CD8-positive, alpha-beta T cell (primary cell): ENCODE measurements at regions of chr15 and their contacts with region 1.

Region 1: DNA sequence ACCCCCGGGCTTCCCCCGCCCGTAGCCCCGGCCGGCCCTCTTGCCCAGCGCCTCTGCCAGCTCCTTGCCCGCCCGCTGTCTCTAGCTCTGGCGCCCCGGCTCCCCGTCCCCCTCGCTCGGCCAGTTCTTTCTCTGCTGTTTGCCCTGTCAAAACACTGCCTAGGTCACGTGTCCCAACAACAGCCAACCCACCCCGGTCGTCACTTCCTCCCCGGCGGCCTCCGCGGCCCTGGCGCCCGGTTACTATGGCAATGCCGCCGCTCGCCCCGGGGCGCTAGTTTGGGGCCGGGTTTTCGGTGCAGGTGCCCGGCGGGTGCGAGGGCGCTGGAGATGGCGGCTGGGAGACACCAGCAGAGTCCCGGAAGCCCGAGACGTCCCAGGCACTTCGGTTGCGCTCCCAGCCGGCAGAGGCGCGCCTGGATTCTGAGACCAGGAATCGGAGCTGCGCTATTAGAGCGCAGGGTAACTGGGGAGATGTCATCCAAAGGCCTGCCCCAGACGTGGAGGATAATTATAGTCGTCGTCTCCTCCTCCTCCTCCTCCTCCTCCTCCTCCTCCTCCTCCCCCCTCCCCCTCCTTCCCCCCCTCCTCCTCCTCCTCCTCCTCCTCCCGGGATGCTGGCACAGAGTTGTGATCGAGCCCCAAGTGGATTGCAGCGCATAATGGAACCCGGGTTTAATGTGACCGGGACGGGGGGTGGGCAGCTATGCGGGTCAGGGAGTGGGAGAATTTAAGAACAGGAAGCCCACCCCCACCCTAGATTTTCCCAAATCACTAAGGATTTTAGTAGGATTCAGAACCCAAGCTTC is at the start of gene ATOSA:
- DNase-seq: peak; percentile 84 to 95 (median 93)
- ATAC-seq: peak; percentile 62
- H3K4me3 ChIP-seq: peak within 1 kb of the TSS; percentile 86 to 93
- H3K4me3 Mint-ChIP-seq: peak within 1 kb of the TSS; percentile 99
- H3K27ac ChIP-seq: peak within 1 kb of the TSS; percentile 97 to 98
- H3K27ac Mint-ChIP-seq: peak within 1 kb of the TSS; percentile 100
- H3K4me1 ChIP-seq: peaks cover 51% of the 10 kb centered on the region
- H3K4me1 Mint-ChIP-seq: peaks cover 57% of the 10 kb centered on the region
- H3K27me3 ChIP-seq: no peaks in the 10 kb centered on the region
- H3K27me3 Mint-ChIP-seq: no peaks in the 10 kb centered on the region
- CTCF ChIP-seq: no peak
- total RNA-seq, gene ATOSA: 133 to 134 TPM

Region 2: GRCh38 chr15:51935466-51936104 is 743.9 kb before region 1 on chr15:
- CTCF ChIA-PET with region 1: no interaction called
- POLR2A ChIA-PET with region 1: no interaction called
- intact Hi-C with region 1: no loop called
- DNase-seq: peak in 1 of 9 experiments; percentile 3
- ATAC-seq: no peak
- H3K4me3 ChIP-seq: no peak overlapping the region
- H3K4me3 Mint-ChIP-seq: no peak overlapping the region
- H3K27ac ChIP-seq: no peak overlapping the region
- H3K27ac Mint-ChIP-seq: peak overlapping the region; percentile 24
- H3K4me1 ChIP-seq: no peaks in the 10 kb centered on the region
- H3K4me1 Mint-ChIP-seq: no peaks in the 10 kb centered on the region
- H3K27me3 ChIP-seq: no peaks in the 10 kb centered on the region
- H3K27me3 Mint-ChIP-seq: no peaks in the 10 kb centered on the region
- CTCF ChIP-seq: no peak

Region 3: DNA sequence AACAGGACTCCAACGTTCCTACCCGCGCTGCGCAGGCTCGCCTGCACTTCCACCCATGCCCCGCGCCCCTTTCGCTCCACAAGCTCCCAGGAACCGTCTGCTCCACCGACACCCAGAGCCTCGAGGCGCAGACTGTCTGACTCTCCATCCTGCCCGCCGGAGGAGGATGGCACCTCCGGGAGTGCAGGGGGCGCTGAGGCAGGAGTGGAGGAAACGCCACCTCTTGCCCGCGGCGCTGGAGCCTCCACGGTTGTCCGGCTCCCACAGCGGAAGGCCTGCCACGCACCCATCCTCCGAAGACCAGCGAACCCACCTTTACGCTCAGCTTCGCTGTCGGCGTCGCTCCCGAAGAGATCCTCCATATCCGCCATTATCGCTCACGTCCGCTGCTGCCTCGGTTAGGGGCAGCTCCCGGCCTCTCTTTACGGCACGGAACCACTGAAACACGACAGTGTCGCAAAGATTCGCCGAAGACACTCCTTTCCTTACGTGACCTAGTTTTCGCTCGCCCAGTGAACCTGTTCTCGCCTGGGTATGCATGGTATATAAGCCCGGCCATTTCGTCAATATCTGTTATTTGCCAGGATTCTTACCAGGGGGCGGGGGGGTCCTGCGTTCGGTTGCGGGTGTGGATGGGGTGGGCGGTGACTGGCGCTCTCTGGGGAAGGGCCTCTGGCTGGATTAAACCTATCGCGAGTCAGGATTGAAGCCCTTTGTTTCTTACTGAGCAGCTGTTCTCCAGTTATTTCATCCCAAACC is 707.9 kb before region 1 on chr15 and contains the start of gene LEO1:
- CTCF ChIA-PET with region 1: no interaction called
- POLR2A ChIA-PET with region 1: no interaction called
- intact Hi-C with region 1: loop called in 1 of 2 experiments (anchors 1 kb)
- DNase-seq: peak; percentile 72 to 97 (median 88)
- ATAC-seq: peak; percentile 91
- H3K4me3 ChIP-seq: peak within 1 kb of the TSS; percentile 85 to 99
- H3K4me3 Mint-ChIP-seq: peak within 1 kb of the TSS; percentile 99
- H3K27ac ChIP-seq: peak within 1 kb of the TSS; percentile 69 to 87
- H3K27ac Mint-ChIP-seq: peak within 1 kb of the TSS; percentile 99
- H3K4me1 ChIP-seq: peaks cover 13% of the 10 kb centered on the region
- H3K4me1 Mint-ChIP-seq: peaks cover 21% of the 10 kb centered on the region
- H3K27me3 ChIP-seq: no peaks in the 10 kb centered on the region
- H3K27me3 Mint-ChIP-seq: no peaks in the 10 kb centered on the region
- CTCF ChIP-seq: peak; percentile 26
- total RNA-seq, gene LEO1: 9.4 TPM

Region 4: GRCh38 chr15:52179278-52180195 is 499.9 kb before region 1 on chr15:
- CTCF ChIA-PET with region 1: no interaction called
- POLR2A ChIA-PET with region 1: interaction called, 5 read pairs
- intact Hi-C with region 1: loop called (anchors 1 to 5 kb)
- DNase-seq: peak; percentile 83 to 95 (median 89)
- ATAC-seq: peak; percentile 84
- H3K4me3 ChIP-seq: peak overlapping the region; percentile 94 to 96
- H3K4me3 Mint-ChIP-seq: peak overlapping the region; percentile 93
- H3K27ac ChIP-seq: peak overlapping the region; percentile 95 to 99
- H3K27ac Mint-ChIP-seq: peak overlapping the region; percentile 99
- H3K4me1 ChIP-seq: peaks cover 16% of the 10 kb centered on the region
- H3K4me1 Mint-ChIP-seq: peaks cover 38% of the 10 kb centered on the region
- H3K27me3 ChIP-seq: no peaks in the 10 kb centered on the region
- H3K27me3 Mint-ChIP-seq: no peaks in the 10 kb centered on the region
- CTCF ChIP-seq: no peak

Region 5: GRCh38 chr15:52349052-52349700 is 330.3 kb before region 1 on chr15:
- CTCF ChIA-PET with region 1: no interaction called
- POLR2A ChIA-PET with region 1: no interaction called
- intact Hi-C with region 1: no loop called
- DNase-seq: no peak
- ATAC-seq: no peak
- H3K4me3 ChIP-seq: no peak overlapping the region
- H3K4me3 Mint-ChIP-seq: no peak overlapping the region
- H3K27ac ChIP-seq: no peak overlapping the region
- H3K27ac Mint-ChIP-seq: no peak overlapping the region
- H3K4me1 ChIP-seq: no peaks in the 10 kb centered on the region
- H3K4me1 Mint-ChIP-seq: no peaks in the 10 kb centered on the region
- H3K27me3 ChIP-seq: no peaks in the 10 kb centered on the region
- H3K27me3 Mint-ChIP-seq: no peaks in the 10 kb centered on the region
- CTCF ChIP-seq: no peak

Region 6: GRCh38 chr15:52481915-52482314 is 197.5 kb before region 1 on chr15:
- CTCF ChIA-PET with region 1: no interaction called
- POLR2A ChIA-PET with region 1: no interaction called
- intact Hi-C with region 1: loop called in 1 of 2 experiments (anchors 5 kb)
- DNase-seq: peak; percentile 24 to 91 (median 53)
- ATAC-seq: peak; percentile 98
- H3K4me3 ChIP-seq: peak overlapping the region in 1 of 2 experiments; percentile 14
- H3K4me3 Mint-ChIP-seq: peak overlapping the region; percentile 27
- H3K27ac ChIP-seq: peak overlapping the region; percentile 15 to 79
- H3K27ac Mint-ChIP-seq: peak overlapping the region; percentile 81
- H3K4me1 ChIP-seq: peaks cover 26% of the 10 kb centered on the region
- H3K4me1 Mint-ChIP-seq: peaks cover 66% of the 10 kb centered on the region
- H3K27me3 ChIP-seq: no peaks in the 10 kb centered on the region
- H3K27me3 Mint-ChIP-seq: no peaks in the 10 kb centered on the region
- CTCF ChIP-seq: no peak

Region 7: GRCh38 chr15:52568601-52569256 is 110.7 kb before region 1 on chr15 and contains the start of gene ARPP19:
- CTCF ChIA-PET with region 1: no interaction called
- POLR2A ChIA-PET with region 1: no interaction called
- intact Hi-C with region 1: loop called (anchors 1 to 2 kb)
- DNase-seq: peak; percentile 56 to 90 (median 77)
- ATAC-seq: peak; percentile 72
- H3K4me3 ChIP-seq: peak within 1 kb of the TSS; percentile 66 to 74
- H3K4me3 Mint-ChIP-seq: peak within 1 kb of the TSS; percentile 94
- H3K27ac ChIP-seq: peak within 1 kb of the TSS; percentile 93 to 95
- H3K27ac Mint-ChIP-seq: peak within 1 kb of the TSS; percentile 99
- H3K4me1 ChIP-seq: peaks cover 29% of the 10 kb centered on the region
- H3K4me1 Mint-ChIP-seq: peaks cover 40% of the 10 kb centered on the region
- H3K27me3 ChIP-seq: no peaks in the 10 kb centered on the region
- H3K27me3 Mint-ChIP-seq: no peaks in the 10 kb centered on the region
- CTCF ChIP-seq: no peak
- total RNA-seq, gene ARPP19: 141 to 156 TPM

Region 8: DNA sequence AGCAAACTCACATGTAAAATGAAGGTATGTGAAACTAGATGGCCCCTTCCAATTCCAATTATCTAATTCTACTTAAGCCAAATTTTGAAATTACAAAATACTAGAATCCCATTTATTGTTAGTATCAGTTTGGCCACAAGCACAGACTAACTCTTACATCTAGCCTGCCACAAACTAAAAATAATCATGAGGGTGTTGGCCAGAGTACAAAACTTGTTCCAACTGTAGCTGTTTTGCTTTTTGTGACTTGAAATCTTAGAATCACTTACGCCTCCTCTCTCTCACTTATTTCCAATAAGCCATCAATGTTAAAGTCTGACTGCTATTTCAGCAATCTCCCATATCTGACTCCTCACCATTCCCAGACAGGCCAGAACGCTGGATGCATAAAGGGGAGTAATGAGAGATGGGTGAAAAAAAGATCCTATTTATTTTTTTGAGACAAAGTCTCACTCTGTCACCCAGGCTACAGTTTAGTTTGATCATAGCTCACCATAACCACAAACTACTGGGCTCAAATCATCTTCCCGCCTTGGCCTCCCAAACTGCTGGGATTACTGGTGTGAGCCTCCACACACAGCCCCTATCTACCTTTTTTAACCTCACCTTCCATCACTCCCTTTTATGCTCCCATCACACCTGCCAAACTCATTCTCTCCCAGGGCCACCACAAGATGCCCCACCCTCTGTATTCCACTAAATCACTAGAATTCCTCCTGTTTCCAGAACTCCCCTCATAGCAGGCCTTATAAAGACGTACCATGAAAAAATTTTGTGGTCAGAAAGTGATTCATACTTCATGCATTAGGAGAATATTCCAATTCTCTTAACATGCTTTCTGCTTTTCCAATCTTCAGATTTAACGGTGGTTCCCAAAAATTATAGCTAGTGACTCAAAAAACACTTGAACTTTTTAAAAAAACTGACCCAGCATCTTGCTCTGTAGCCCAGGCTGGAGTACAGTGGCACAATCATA is 36.8 kb before region 1 on chr15:
- CTCF ChIA-PET with region 1: no interaction called
- POLR2A ChIA-PET with region 1: interaction called, 3 read pairs
- intact Hi-C with region 1: loop called in 1 of 2 experiments (anchors 5 kb)
- DNase-seq: no peak
- ATAC-seq: no peak
- H3K4me3 ChIP-seq: no peak overlapping the region
- H3K4me3 Mint-ChIP-seq: no peak overlapping the region
- H3K27ac ChIP-seq: no peak overlapping the region
- H3K27ac Mint-ChIP-seq: no peak overlapping the region
- H3K4me1 ChIP-seq: no peaks in the 10 kb centered on the region
- H3K4me1 Mint-ChIP-seq: peaks cover 11% of the 10 kb centered on the region
- H3K27me3 ChIP-seq: no peaks in the 10 kb centered on the region
- H3K27me3 Mint-ChIP-seq: no peaks in the 10 kb centered on the region
- CTCF ChIP-seq: no peak

Region 9: DNA sequence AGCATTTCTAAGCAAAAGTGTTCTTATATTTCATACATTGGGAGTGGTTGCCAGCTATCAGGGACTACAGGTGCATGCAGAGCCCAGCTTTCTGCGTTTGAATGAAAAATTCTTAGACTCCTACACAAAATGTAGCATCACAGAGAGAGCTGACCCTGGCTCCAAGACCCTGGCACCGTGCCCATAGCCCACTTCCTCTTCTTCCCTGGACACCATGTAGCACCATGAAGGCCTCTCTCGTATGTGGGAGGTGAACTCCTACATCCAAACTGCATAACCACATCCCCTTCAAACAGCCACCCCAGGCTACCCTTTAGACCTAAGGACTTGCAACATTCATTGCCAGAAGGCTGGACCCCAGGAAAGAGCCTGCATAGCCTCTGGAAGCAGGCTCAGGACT is 35.5 kb after region 1 on chr15:
- CTCF ChIA-PET with region 1: no interaction called
- POLR2A ChIA-PET with region 1: no interaction called
- intact Hi-C with region 1: no loop called
- DNase-seq: no peak
- ATAC-seq: no peak
- H3K4me3 ChIP-seq: no peak overlapping the region
- H3K4me3 Mint-ChIP-seq: no peak overlapping the region
- H3K27ac ChIP-seq: no peak overlapping the region
- H3K27ac Mint-ChIP-seq: no peak overlapping the region
- H3K4me1 ChIP-seq: no peaks in the 10 kb centered on the region
- H3K4me1 Mint-ChIP-seq: no peaks in the 10 kb centered on the region
- H3K27me3 ChIP-seq: no peaks in the 10 kb centered on the region
- H3K27me3 Mint-ChIP-seq: no peaks in the 10 kb centered on the region
- CTCF ChIP-seq: no peak

Region 10: DNA sequence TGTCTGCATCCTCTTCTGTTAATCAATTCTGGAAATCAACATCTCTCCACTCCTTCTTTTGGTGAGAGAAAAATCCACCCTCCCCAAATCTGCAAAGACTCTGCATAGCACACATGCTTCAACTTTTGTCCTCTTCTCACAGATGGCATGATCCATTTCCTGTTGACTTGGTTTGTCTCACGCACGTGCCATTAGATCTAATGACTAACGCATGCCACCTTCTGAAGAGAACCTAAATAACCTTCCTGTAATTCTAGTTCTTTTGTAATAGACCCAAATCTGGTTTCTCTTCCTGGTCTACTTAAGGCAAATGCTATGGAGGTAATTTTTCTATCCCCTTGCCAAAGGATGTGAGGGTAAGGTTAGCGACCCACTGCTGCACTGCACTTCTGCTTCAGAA is 50.7 kb after region 1 on chr15:
- CTCF ChIA-PET with region 1: interaction called, 9 read pairs
- POLR2A ChIA-PET with region 1: interaction called, 10 read pairs
- intact Hi-C with region 1: loop called (anchors 1 to 2 kb)
- DNase-seq: peak in 7 of 9 experiments; percentile 11 to 83 (median 63)
- ATAC-seq: peak; percentile 99
- H3K4me3 ChIP-seq: no peak overlapping the region
- H3K4me3 Mint-ChIP-seq: peak overlapping the region; percentile 3
- H3K27ac ChIP-seq: peak overlapping the region in 1 of 2 experiments; percentile 18
- H3K27ac Mint-ChIP-seq: peak overlapping the region; percentile 79
- H3K4me1 ChIP-seq: peaks cover 14% of the 10 kb centered on the region
- H3K4me1 Mint-ChIP-seq: peaks cover 15% of the 10 kb centered on the region
- H3K27me3 ChIP-seq: no peaks in the 10 kb centered on the region
- H3K27me3 Mint-ChIP-seq: no peaks in the 10 kb centered on the region
- CTCF ChIP-seq: peak; percentile 29

Region 11: DNA sequence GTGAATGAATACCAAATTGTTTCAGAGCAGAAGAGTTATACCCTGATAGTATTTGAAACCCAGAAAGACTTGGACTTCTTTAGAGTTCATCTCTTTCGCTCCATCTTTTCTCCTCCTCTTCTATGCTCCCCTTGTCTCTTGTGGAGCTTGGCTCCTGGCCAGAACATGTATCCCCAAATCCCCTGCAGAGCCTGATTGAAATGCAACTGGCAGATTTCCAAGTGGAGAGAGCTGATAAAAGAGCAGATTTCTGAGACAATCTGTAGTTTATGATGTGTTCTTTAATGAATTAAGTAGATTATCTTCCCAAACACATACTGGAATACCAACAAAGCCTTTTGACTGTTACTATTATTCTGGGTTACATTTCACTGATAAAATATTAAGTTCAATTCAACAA is 1332.2 kb after region 1 on chr15:
- CTCF ChIA-PET with region 1: no interaction called
- POLR2A ChIA-PET with region 1: no interaction called
- intact Hi-C with region 1: no loop called
- DNase-seq: no peak
- ATAC-seq: no peak
- H3K4me3 ChIP-seq: no peak overlapping the region
- H3K4me3 Mint-ChIP-seq: no peak overlapping the region
- H3K27ac ChIP-seq: no peak overlapping the region
- H3K27ac Mint-ChIP-seq: no peak overlapping the region
- H3K4me1 ChIP-seq: no peaks in the 10 kb centered on the region
- H3K4me1 Mint-ChIP-seq: no peaks in the 10 kb centered on the region
- H3K27me3 ChIP-seq: no peaks in the 10 kb centered on the region
- H3K27me3 Mint-ChIP-seq: no peaks in the 10 kb centered on the region
- CTCF ChIP-seq: no peak